GM18951 (cell line): ENCODE measurements at regions of chr5 and their contacts with region 1.

Region 1: GRCh38 chr5:14156650-14157493 is 13.7 kb downstream of the TRIO start:
- POLR2A ChIP-seq: no peak

Region 2: GRCh38 chr5:14270209-14270702 is 113.4 kb after region 1 on chr5:
- in situ Hi-C with region 1: no loop called
- POLR2A ChIP-seq: no peak

Region 3: GRCh38 chr5:14664302-14665100 is 507.6 kb after region 1 on chr5 and contains the start of gene OTULIN:
- in situ Hi-C with region 1: loop called (anchors 25 kb)
- POLR2A ChIP-seq: peak; percentile 89